ENCODE measurements at regions of chr13 and their contacts with region 1.

Region 1: GRCh38 chr13:92473765-92474475 is 752.7 kb upstream of the GPC6 start:
- DNase-seq: no peak
- H3K4me3 ChIP-seq: no peak overlapping the region
- H3K27ac ChIP-seq: no peak overlapping the region
- H3K4me1 ChIP-seq: no peaks in the 10 kb centered on the region
- H3K27me3 ChIP-seq: no peaks in the 10 kb centered on the region
- CTCF ChIP-seq: no peak

Region 2: DNA sequence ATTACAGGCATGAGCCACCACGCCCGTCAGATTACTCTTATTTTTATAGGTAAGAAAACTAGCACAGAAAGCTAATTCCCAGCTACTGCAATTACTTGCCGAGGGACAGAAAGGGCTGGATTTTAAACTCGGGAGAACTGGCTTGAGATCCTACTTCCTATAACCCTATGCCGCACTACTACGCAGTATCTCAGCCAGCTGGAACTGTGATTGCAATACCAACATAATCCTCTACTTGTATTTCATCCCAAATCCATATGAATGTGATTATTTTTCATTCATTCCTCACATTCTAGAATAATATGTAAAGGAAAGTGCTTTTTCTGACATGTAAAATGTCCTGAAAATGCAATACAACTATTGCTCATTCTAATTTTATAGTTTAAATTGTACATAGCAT is 21.1 kb before region 1 on chr13:
- CTCF ChIA-PET with region 1: no interaction called
- POLR2A ChIA-PET with region 1: interaction called, 20 read pairs
- intact Hi-C with region 1: no loop called
- DNase-seq: no peak
- H3K4me3 ChIP-seq: no peak overlapping the region
- H3K27ac ChIP-seq: no peak overlapping the region
- H3K4me1 ChIP-seq: no peaks in the 10 kb centered on the region
- H3K27me3 ChIP-seq: no peaks in the 10 kb centered on the region
- CTCF ChIP-seq: no peak